Activated CD4-positive, alpha-beta T cell treated with anti-CD3 and anti-CD28 coated beads for 36 hours (primary cell): ENCODE measurements at regions of chr20 and their contacts with region 1.

Region 1: GRCh38 chr20:2285618-2286017 is 10.2 kb upstream of the TGM3 start:
- DNase-seq: no peak
- ATAC-seq: no peak
- H3K4me3 Mint-ChIP-seq: no peak overlapping the region
- H3K27ac Mint-ChIP-seq: no peak overlapping the region
- H3K4me1 Mint-ChIP-seq: no peaks in the 10 kb centered on the region
- H3K27me3 Mint-ChIP-seq: peaks cover 4% of the 10 kb centered on the region

Region 2: GRCh38 chr20:2349818-2350508 is 64.3 kb after region 1 on chr20:
- CTCF ChIA-PET with region 1: interaction called, 3 read pairs
- POLR2A ChIA-PET with region 1: interaction called, 10 read pairs
- intact Hi-C with region 1: no loop called
- DNase-seq: no peak
- ATAC-seq: no peak
- H3K4me3 Mint-ChIP-seq: no peak overlapping the region
- H3K27ac Mint-ChIP-seq: no peak overlapping the region
- H3K4me1 Mint-ChIP-seq: peaks cover 6% of the 10 kb centered on the region
- H3K27me3 Mint-ChIP-seq: peaks cover 17% of the 10 kb centered on the region